Activated T-helper 1 cell treated with anti-CD3 and anti-CD28 coated beads, Interleukin-12 subunit alpha, Interleukin-12 subunit beta, Interleukin-2, Interleukin-4 antibody, amounts not matched to agents 30 ng/mL and 10 ng/mL and 1 ng/mL, durations not matched to agents 14 hours and 24 hours and 36 hours (primary cell): ENCODE measurements at regions of chr1 and their contacts with region 1.

Region 1: DNA sequence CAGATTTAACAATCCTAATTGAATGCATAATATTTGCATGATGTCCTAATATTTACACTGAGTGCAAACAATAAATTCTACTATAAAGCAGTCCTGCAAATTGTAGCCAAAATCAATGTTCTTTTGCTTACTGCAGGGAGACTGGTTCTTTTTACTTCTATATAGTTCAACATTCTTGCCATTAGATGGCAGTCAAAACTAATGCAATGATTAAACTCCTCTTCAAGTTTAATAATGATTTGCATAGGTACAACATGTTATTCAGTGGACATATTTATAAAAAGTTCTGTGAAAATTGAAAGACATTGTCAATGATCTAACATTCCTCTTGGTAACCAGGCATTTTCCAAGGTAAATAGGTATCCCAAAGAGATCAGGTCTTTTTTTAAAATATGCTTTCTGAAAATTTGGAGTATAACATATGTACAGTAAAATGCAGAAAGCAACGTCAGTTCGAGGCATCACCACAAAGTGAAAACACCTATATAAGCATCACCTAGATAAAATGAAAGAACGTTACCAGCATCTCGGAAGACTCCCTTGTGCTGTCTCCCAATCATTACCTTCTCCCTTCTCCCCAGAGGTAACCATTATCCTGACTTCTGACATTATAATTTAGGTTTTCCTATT is 9.8 kb upstream of the FNBP1L start:
- DNase-seq: no peak
- H3K4me3 Mint-ChIP-seq: no peak overlapping the region
- H3K27ac Mint-ChIP-seq: no peak overlapping the region
- H3K4me1 Mint-ChIP-seq: no peaks in the 10 kb centered on the region
- H3K27me3 Mint-ChIP-seq: peaks cover 39% of the 10 kb centered on the region

Region 2: DNA sequence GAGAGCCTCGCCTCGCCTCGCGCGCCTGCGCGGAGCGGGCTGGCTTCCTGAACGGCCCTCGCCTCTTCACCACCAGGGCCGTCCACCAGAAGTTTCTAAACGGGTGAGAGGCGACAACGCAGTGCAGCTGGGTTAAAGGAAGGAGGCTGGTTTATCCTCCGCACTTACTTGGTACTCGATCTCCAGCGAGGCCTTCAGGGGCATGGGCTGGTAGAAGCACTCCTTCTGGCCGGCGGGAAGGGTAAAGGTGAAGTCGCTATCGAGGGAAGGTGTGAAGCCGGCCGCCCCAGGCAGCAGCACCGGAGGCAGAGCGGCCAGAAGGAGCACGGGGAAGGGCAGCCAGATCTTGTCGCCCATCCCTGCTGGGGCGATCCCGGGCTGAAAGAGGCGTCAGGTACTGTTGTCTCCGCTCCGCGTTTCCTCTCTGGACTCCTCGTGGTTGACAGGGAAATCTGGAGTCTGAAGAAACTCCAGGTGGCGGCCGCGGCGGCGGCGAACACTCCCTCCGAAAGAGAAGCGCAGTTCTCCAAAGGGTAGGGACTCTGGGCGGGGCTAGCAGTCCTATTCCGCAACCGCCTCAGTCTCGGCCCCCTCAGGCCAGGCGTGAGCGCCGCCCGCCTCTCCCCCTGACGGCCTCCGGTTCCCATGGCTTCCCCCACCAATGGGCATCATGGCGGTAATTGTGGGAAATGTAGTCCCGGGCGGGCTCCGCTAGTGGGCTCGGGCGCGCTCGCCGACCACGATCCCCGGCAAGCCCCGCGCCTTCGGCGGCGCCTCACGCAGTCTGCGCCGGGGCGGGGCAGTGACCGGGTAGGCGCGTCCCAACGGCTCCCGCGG is 258.0 kb before region 1 on chr1 and contains the start of gene TMED5:
- intact Hi-C with region 1: no loop called
- DNase-seq: peak; percentile 98
- H3K4me3 Mint-ChIP-seq: peak within 1 kb of the TSS; percentile 93
- H3K27ac Mint-ChIP-seq: peak within 1 kb of the TSS; percentile 96
- H3K4me1 Mint-ChIP-seq: peaks cover 57% of the 10 kb centered on the region
- H3K27me3 Mint-ChIP-seq: no peaks in the 10 kb centered on the region
- total RNA-seq, gene TMED5: 46.7 and 48.7 TPM in 2 replicates

Region 3: DNA sequence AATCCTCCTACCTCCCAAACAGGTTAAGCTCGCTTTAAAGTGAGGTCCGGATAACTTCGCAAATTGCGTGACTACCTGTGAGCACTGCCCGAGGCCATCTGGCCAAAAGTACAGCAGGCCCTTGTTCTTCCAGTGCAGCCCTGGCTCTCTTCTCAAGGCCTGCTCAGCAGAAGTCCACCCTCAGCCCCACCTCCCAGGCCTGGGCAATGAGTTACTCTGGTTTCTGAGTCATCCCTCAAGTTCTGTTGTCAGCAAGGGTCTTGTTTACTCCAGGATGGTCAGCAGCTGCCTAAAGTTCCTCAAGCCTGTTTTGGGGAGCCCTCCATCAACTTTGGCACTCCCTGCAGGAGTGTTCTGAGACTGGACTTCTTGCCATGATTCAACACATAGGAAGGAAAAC is 141.8 kb after region 1 on chr1:
- intact Hi-C with region 1: no loop called
- DNase-seq: no peak
- H3K4me3 Mint-ChIP-seq: no peak overlapping the region
- H3K27ac Mint-ChIP-seq: no peak overlapping the region
- H3K4me1 Mint-ChIP-seq: no peaks in the 10 kb centered on the region
- H3K27me3 Mint-ChIP-seq: peaks cover 1% of the 10 kb centered on the region

Region 4: GRCh38 chr1:93615582-93616150 is 177.6 kb after region 1 on chr1:
- intact Hi-C with region 1: loop called (anchors 1 kb)
- DNase-seq: no peak
- H3K4me3 Mint-ChIP-seq: peak overlapping the region; percentile 25
- H3K27ac Mint-ChIP-seq: peak overlapping the region; percentile 72
- H3K4me1 Mint-ChIP-seq: peaks cover 22% of the 10 kb centered on the region
- H3K27me3 Mint-ChIP-seq: peaks cover 39% of the 10 kb centered on the region

Region 5: GRCh38 chr1:93629099-93630059 is 191.3 kb after region 1 on chr1:
- intact Hi-C with region 1: loop called (anchors 1 kb)
- DNase-seq: peak; percentile 24
- H3K4me3 Mint-ChIP-seq: no peak overlapping the region
- H3K27ac Mint-ChIP-seq: no peak overlapping the region
- H3K4me1 Mint-ChIP-seq: no peaks in the 10 kb centered on the region
- H3K27me3 Mint-ChIP-seq: peaks cover 7% of the 10 kb centered on the region

Region 6: DNA sequence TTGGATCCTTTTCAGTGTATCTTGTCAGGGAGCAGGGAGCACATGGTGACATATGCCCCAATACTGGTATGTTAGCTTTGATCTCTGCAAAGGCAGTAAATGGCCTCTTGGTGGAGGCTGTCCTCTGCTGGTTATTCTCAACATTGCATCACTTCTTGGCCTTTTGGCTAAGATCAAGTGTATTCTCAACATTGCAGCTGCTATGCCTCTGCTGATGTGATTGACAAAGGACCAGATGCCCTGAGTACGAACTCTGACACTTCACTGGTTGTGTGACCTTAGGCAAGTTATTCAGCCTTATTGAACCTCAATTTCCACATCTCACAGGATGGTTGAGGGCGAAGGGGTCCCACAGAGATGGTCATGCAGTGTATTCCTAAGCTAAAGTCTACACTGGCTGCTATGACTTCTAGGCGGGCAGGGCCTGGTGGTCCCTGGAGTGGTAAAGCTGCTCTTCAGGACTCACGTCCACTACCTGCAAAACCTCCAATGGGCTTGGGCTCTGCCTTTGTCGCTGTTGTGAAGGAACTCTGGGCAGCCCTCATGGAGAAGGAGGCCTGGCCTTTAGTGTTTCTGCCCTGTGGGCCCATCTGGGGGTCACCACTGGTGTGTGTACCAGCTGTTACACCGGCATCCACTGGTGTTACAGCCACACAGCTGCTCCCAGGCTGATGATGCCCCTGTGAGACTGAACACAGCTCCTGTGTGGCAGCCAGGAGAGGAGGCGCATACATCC is 376.1 kb after region 1 on chr1:
- intact Hi-C with region 1: loop called (anchors 1 kb)
- DNase-seq: peak; percentile 31
- H3K4me3 Mint-ChIP-seq: no peak overlapping the region
- H3K27ac Mint-ChIP-seq: no peak overlapping the region
- H3K4me1 Mint-ChIP-seq: peaks cover 15% of the 10 kb centered on the region
- H3K27me3 Mint-ChIP-seq: no peaks in the 10 kb centered on the region